ENCODE measurements at regions of chr10 and their contacts with region 1.

Region 1: GRCh38 chr10:71893920-71894319 is 42.9 kb upstream of the PSAP start:
- DNase-seq: no peak
- H3K4me3 ChIP-seq: no peak overlapping the region
- H3K27ac ChIP-seq: no peak overlapping the region
- H3K27me3 ChIP-seq: no peaks in the 10 kb centered on the region
- CTCF ChIP-seq: no peak

Region 2: DNA sequence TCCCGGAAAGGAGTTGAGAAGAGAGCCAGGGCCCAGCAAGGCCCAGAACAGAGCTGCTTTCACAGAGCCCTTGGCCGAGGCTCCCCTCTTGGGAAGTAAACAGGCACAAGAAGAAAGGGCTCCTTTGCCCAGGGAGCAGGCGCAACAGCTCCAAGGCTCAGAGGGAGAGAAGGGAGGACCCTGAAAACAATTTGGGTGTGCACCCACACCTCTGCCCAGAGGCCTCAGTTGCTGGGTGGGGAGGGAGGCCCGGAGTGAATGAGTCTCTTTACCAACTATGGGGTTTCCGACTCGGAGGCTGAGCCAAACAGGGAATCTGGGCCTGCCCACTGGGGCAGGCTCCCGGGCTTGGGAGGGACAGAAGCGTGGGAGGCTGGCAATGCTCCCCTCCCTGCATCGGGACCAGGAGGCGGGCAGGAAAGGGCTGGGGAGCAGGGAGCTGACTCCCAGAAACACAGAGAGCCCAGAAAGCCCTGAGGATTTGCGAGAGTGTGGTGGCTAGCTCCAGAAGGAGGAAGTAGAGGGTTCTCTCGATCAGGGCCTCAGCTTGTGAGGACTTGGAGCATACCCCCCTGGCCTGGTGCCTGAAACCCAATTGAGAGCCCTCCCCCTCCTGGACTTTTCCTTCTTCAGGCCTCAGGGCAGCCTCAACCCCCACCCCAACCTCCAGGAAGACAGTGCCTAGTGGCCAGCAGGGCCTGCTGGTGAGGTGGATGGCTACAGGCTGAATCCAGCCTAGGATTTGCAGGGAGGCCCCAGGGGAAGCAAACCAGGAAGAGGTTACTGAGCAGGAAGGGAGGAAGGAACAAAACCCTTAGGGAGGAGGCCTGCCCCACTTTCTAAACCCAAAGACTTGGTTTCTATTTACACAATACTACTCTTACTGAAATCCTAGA is 180.5 kb before region 1 on chr10:
- intact Hi-C with region 1: loop called (anchors 5 to 10 kb)
- DNase-seq: peak; percentile 52 to 86 (median 84)
- H3K4me3 ChIP-seq: peak overlapping the region in 7 of 59 donors; percentile 1 to 36 (median 10)
- H3K27ac ChIP-seq: peak overlapping the region; percentile 87 to 99 (median 97)
- H3K27me3 ChIP-seq: no peaks in the 10 kb centered on the region
- CTCF ChIP-seq: peak in 14 of 56 donors; percentile 5 to 49 (median 18)

Region 3: DNA sequence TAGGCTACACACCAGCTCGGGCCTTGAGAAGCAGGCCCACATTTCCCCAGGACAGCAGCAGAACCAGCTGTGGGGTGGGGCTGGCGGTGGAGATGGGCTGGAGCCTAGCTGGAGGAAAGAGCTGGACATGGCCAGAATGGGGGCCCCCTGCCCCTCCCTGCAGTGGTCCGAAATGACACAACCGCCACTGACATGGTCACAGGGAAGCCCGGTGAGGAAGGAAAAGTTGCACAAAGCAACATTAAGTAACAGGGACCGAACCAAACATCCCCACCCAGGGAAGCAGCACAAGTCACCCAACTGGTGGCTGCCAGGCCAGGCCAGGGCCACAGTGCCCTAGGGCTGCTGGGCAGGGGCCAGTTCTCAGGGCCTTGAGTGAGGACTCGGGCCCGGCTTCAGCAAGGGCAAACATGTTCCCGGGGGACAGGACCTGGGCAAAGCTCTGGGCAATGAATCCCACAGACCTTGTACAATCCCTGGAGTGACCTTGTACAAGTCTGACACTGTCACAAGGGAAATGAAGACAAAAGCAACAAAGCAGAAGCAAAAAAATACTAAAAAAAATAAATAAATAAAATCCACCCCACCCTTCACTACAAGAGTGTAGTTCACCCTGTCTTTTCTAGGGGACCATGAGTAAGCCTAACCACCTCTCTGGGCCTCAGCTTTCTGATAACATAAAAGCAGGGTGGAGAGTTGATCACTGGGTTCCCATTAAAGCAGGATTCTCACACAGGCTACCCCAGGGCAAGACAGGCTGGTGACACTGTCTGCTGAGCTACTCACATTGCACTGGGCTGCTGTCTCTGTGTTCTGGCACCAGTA is 75.9 kb before region 1 on chr10:
- intact Hi-C with region 1: loop called in 1 of 2 experiments (anchors 5 kb)
- DNase-seq: peak in 3 of 10 donors; percentile 23 to 63 (median 59)
- H3K4me3 ChIP-seq: no peak overlapping the region
- H3K27ac ChIP-seq: peak overlapping the region; percentile 30 to 97 (median 87)
- H3K27me3 ChIP-seq: no peaks in the 10 kb centered on the region
- CTCF ChIP-seq: no peak

Region 4: GRCh38 chr10:71829171-71829570 is 64.7 kb before region 1 on chr10:
- intact Hi-C with region 1: loop called in 1 of 2 experiments (anchors 5 kb)
- DNase-seq: peak in 1 of 10 donors; percentile 42
- H3K4me3 ChIP-seq: no peak overlapping the region
- H3K27ac ChIP-seq: peak overlapping the region in 40 of 59 donors; percentile 4 to 72 (median 33)
- H3K27me3 ChIP-seq: no peaks in the 10 kb centered on the region
- CTCF ChIP-seq: no peak